SK-N-SH (cell line): ENCODE measurements at regions of chr10 and their contacts with region 1.

Region 1: DNA sequence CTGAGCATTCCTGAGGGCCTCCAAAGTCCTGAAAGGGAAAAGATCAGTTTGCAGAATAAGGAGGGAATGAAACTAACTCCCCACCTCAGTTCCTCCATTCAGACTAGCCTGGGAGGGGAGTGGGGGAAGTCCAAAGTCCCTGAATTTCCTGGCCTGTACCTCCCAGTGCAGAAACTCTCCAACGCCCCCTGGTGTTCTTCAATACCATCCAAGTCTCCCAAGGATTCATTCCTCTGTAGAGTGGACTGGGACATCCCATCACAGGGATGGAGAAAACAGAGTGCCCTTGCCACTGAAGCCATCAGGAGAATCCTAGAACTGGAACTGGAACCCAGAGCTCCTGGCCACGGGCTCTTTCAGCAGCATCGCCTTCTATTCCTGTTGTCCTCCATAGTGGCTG is 1.6 kb upstream of the COL13A1 start:
- DNase-seq: peak; percentile 73
- H3K4me3 ChIP-seq: no peak overlapping the region; a peak in 1 of 4 replicates
- H3K27ac ChIP-seq: no peak overlapping the region
- H3K4me1 ChIP-seq: peaks cover 0 to 10% of the 10 kb centered on the region in 2 experiments; a peak in 2 of 4 replicates
- H3K27me3 ChIP-seq: 0 out of 2 replicates have a peak, but pooled peaks cover 10% of the 10 kb centered on the region
- CTCF ChIP-seq: peak; percentile 79
- EP300 ChIP-seq: no peak
- RAD21 ChIP-seq: peak; percentile 77

Region 2: DNA sequence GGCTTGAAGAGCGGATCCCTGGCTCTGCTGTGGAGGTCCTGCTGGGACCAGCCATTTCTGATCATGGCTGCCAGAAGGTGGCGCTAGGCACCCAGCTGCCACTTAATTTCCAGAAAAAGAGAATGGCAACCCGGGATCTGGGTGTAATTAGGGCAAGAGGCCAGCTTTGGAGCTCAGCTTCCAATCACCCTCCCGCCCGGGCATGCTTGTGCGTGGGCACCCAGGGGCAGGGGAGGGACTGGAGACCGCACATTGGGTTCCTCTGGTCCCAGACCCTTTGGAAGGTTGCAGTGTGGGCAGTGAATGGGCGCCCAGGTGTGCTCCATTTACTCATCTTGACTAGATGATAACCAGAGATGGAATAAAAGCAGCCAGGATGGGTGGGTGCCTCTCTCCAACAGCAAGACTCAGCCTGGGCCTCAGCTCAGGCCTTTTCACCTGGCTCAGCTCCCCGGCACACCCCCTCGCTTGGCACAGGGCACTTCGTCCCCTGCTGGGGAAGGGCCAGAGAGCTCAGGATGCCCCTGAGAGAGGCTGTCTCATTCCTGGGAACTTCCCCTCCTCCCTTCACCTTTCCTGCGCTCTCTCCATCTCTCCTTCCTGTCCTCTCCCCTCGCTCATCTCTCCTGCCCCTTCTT is 155.3 kb before region 1 on chr10:
- CTCF ChIA-PET with region 1: interaction called, 67 read pairs
- POLR2A ChIA-PET with region 1: no interaction called
- DNase-seq: peak; percentile 91
- H3K4me3 ChIP-seq: no peak overlapping the region; a peak in 1 of 4 replicates
- H3K27ac ChIP-seq: no peak overlapping the region
- H3K4me1 ChIP-seq: peaks cover 0 to 12% of the 10 kb centered on the region in 2 experiments; a peak in 1 of 4 replicates
- H3K27me3 ChIP-seq: 0 out of 2 replicates have a peak, but pooled peaks cover 4% of the 10 kb centered on the region
- CTCF ChIP-seq: peak; percentile 89
- EP300 ChIP-seq: no peak
- RAD21 ChIP-seq: peak; percentile 97

Region 3: DNA sequence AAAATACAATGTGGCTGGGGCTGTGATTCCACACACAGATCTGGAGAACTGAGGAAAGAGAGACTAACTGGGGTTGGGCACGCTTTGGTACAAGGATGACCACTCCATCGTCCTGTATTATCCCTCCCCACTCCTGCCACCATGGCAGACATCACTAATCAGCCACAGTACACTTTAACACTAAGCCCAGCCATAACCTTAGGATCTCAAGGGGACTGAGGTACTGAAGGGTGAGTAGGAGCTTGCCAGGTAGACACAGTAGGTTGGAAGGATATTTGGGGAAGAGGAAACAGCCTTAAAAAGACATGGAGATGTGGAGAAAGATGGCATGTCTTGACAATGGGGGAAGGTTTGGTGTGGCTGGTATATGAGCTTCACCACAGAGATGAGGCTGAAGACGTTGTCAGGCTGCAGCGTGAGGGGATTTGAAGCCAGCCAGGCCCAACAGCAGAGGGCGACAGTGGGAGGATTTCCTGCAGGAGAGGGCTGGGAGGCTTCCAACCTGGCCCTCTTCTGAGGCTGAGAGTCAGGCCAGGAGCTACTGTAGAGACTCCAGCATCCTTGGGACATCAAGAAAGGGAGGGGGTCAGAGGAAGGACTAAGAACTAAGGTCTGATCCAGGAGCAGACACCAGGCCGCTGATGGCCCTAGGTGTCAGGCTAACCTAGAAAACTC is 57.0 kb before region 1 on chr10:
- CTCF ChIA-PET with region 1: interaction called, 37 read pairs
- POLR2A ChIA-PET with region 1: no interaction called
- DNase-seq: peak; percentile 64
- H3K4me3 ChIP-seq: no peak overlapping the region
- H3K27ac ChIP-seq: no peak overlapping the region
- H3K4me1 ChIP-seq: peaks cover 0 to 4% of the 10 kb centered on the region in 2 experiments; a peak in 1 of 4 replicates
- H3K27me3 ChIP-seq: peaks cover 7% of the 10 kb centered on the region; the same call in 1 of the 2 replicates
- CTCF ChIP-seq: peak; percentile 64
- EP300 ChIP-seq: no peak
- RAD21 ChIP-seq: peak; percentile 69

Region 4: GRCh38 chr10:69769395-69769992 is 30.6 kb before region 1 on chr10:
- CTCF ChIA-PET with region 1: interaction called, 48 read pairs
- POLR2A ChIA-PET with region 1: no interaction called
- DNase-seq: no peak
- H3K4me3 ChIP-seq: no peak overlapping the region
- H3K27ac ChIP-seq: peak overlapping the region in 1 of 2 experiments; percentile 43; a peak in 2 of 4 replicates
- H3K4me1 ChIP-seq: peaks cover 11 to 12% of the 10 kb centered on the region in 2 experiments; a peak in 2 of 4 replicates
- H3K27me3 ChIP-seq: no peaks in the 10 kb centered on the region
- CTCF ChIP-seq: no peak; the same call in 1 of the 2 replicates
- EP300 ChIP-seq: 0 out of 4 replicates have a peak, but pooled peaks of 1 of the 2 experiments have one; percentile 10
- RAD21 ChIP-seq: no peak

Region 5: DNA sequence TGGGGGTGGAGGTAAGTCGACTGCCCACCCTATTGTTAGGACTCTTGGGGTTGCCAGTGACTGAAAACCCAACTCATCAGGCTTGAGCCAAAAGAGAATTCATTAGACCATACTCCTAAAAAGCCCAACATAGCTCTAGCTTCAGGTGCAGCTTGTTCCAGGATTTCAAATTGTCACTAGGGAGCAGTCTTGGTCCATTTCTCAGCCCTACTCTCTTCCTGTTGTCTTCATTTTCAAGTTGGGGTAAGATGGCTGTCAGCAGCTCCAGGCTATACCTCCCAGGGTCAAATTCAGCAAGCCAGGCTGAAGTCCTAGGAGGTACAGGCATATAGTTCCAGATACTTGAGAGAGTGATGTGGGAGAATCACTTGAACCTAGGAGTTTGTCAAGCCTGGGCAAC is 13.3 kb before region 1 on chr10:
- CTCF ChIA-PET with region 1: interaction called, 18 read pairs
- POLR2A ChIA-PET with region 1: no interaction called
- DNase-seq: no peak
- H3K4me3 ChIP-seq: no peak overlapping the region
- H3K27ac ChIP-seq: no peak overlapping the region
- H3K4me1 ChIP-seq: no peaks in the 10 kb centered on the region
- H3K27me3 ChIP-seq: peaks cover 27% of the 10 kb centered on the region; the same call in 1 of the 2 replicates
- CTCF ChIP-seq: peak; percentile 58
- EP300 ChIP-seq: no peak
- RAD21 ChIP-seq: peak; percentile 63

Region 6: DNA sequence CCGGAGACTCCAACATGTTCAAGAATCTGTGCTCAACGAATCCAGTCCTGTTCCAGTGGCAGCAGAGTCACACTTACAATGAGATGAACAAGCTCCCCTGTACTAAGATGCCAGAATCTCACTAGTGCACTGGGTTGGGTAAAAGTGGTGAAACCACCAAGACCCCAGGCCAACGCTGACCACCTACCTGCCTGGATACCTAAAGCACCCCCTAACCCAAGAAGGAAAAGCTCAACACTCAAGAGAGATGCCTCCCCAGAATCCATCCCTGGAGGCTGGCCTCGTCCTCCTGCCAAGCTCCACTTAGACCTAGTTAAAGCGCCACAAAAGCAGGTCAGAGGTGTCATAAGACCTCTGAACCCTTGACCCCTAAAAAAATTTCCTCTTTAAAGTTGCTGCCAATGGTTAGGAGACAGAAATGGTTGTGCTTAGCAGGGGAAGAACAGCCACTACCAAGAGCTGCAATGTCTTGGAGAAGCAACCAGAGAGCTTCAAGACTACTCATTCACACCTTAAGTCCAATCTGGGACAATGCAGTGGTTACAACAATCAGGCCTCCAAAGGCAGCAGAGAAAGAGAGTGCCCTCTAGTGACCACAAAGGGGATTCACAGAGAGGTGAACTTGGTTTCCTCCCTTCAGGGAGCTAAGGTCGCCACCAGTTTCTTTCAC is 157.9 kb after region 1 on chr10:
- CTCF ChIA-PET with region 1: interaction called, 16 read pairs
- POLR2A ChIA-PET with region 1: no interaction called
- DNase-seq: peak; percentile 73
- H3K4me3 ChIP-seq: no peak overlapping the region
- H3K27ac ChIP-seq: no peak overlapping the region
- H3K4me1 ChIP-seq: peaks cover 0 to 5% of the 10 kb centered on the region in 2 experiments; a peak in 1 of 4 replicates
- H3K27me3 ChIP-seq: no peaks in the 10 kb centered on the region
- CTCF ChIP-seq: peak; percentile 81
- EP300 ChIP-seq: no peak
- RAD21 ChIP-seq: peak; percentile 69

Region 7: GRCh38 chr10:70169649-70170364 is 369.7 kb after region 1 on chr10:
- CTCF ChIA-PET with region 1: no interaction called
- POLR2A ChIA-PET with region 1: no interaction called
- DNase-seq: peak; percentile 41
- H3K4me3 ChIP-seq: peak overlapping the region; percentile 86 to 92
- H3K27ac ChIP-seq: peak overlapping the region; percentile 69 to 88
- H3K4me1 ChIP-seq: peaks cover 0 to 5% of the 10 kb centered on the region in 2 experiments; a peak in 2 of 4 replicates
- H3K27me3 ChIP-seq: no peaks in the 10 kb centered on the region
- CTCF ChIP-seq: no peak
- EP300 ChIP-seq: no peak
- RAD21 ChIP-seq: no peak